IMR-90 (cell line): ENCODE measurements at regions of chr2 and their contacts with region 1.

Region 1: DNA sequence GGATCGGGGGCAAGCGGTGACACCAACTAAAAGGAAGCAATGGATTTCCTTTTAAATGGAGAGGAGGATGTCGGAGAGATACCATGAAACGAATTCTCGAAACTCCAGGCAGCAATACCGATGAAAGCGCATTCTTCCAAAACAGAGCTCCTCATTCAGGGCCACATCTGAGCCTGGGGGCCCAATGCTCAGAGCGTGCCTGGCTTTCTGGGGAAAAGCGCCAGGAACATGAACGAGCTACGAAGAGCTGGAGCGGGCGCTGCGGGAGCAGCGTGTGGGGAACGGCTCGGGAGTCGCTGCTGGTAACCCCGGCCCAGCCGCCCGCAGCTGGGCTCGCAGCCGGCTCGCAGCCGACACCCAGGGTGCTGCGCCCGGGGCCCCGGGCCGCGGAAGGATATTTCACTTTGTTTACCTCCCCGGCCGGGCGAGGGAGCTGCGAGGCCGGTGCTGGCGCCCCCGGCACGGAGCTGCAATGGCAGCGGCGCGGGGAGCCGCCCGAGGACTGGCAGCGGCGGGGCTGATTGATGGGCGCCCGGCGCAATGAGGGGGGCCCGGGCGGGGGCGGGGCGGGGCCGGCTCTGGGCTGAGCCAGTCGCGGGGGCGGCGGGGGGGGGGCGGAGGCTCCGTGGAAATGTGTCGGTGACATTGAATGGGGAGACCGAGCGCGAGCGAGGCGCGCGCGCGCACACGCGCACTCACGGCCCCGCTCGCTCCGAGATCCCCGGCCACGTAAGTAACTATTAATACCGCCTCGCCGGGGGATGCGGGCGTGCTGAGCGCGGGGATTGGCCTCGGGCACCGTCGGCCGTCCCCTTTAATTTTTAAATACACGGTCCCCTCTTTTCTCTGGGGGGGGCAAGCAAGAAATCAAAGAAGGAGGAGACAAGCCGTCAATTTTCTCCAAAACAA is at the start of gene TRIB2:
- DNase-seq: peak; percentile 84
- ATAC-seq: peak; percentile 78
- H3K4me3 ChIP-seq: peak within 1 kb of the TSS; percentile 92
- H3K27ac ChIP-seq: peak within 1 kb of the TSS; percentile 98
- H3K4me1 ChIP-seq: peaks cover 14% of the 10 kb centered on the region
- H3K27me3 ChIP-seq: no peaks in the 10 kb centered on the region
- CTCF ChIP-seq: peak; percentile 24; the same call in 1 of the 2 replicates
- POLR2A ChIP-seq: peak; percentile 15; the same call in 1 of the 2 replicates
- RAD21 ChIP-seq: peak; percentile 39
- total RNA-seq, gene TRIB2: 12.7 and 16.1 TPM in 2 replicates

Region 2: DNA sequence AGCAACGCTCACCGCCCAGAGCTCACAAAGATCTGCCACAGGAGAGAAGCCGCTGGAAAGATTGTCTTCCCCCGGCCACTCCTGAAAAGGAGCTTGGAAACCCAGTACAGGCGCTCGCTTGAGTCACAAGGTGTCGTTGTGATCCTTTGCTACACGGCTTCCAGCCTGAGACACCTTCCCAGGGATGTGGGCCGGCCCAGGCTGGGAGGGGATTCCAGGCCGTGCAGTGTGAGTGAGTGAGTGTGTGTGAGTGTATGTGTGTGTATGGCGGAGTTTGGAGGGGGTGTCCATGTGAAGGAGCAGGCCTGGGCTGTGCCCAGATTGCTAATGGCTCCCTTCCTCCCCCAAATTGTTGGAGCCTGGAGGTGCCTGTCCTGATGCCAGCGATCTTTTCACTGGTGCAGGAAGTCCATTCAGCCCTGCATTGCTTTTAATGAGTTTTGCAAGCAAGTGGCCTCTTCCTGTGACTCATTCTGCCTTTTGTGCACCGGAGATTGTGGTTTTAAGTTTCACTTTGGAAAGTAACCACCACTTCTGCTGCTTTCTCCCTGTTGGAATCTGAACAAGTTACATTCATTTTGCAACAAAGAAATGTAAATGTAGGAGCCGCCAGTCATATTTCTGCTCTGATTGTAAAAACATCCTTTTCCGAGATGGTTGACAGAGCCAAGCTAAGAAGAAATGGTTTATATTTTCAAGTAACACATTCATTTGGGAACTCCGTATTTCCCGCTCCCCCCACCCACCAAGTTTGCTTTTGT is 886.4 kb before region 1 on chr2:
- CTCF ChIA-PET with region 1: interaction called, 5 read pairs
- POLR2A ChIA-PET with region 1: no interaction called
- dilution Hi-C with region 1: no loop called
- in situ Hi-C with region 1: loop called (anchors 5 kb)
- intact Hi-C with region 1: loop called (anchors 1 kb)
- DNase-seq: peak; percentile 98
- ATAC-seq: peak; percentile 83
- H3K4me3 ChIP-seq: peak overlapping the region; percentile 25; the same call in 1 of the 2 replicates
- H3K27ac ChIP-seq: peak overlapping the region; percentile 96
- H3K4me1 ChIP-seq: peaks cover 19% of the 10 kb centered on the region
- H3K27me3 ChIP-seq: no peaks in the 10 kb centered on the region
- CTCF ChIP-seq: peak; percentile 55
- POLR2A ChIP-seq: no peak
- RAD21 ChIP-seq: peak; percentile 68

Region 3: DNA sequence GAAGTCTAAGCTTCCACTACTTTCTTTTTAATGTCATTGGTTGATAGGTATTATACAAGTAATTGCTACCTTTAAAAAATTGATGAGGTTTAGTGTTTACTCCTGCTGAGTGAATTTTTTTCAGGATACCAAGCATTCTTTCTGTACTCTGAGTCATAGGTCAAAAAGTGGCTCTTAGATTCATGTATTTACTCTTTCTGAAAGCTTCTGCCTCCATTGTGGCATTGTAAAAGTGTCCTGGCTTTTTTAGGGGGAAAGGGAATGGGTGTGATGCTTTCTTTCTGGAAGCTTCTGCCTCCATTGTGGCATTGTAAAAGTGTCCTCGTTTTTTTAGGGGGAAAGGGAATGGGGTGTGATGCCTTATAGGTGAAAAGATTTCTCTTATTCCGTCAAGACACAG is 683.6 kb before region 1 on chr2:
- CTCF ChIA-PET with region 1: no interaction called
- POLR2A ChIA-PET with region 1: no interaction called
- dilution Hi-C with region 1: no loop called
- in situ Hi-C with region 1: no loop called
- intact Hi-C with region 1: loop called (anchors 1 kb)
- DNase-seq: peak; percentile 37
- ATAC-seq: peak; percentile 80
- H3K4me3 ChIP-seq: no peak overlapping the region
- H3K27ac ChIP-seq: peak overlapping the region; percentile 51
- H3K4me1 ChIP-seq: peaks cover 3% of the 10 kb centered on the region
- H3K27me3 ChIP-seq: no peaks in the 10 kb centered on the region
- CTCF ChIP-seq: no peak
- POLR2A ChIP-seq: no peak
- RAD21 ChIP-seq: no peak

Region 4: DNA sequence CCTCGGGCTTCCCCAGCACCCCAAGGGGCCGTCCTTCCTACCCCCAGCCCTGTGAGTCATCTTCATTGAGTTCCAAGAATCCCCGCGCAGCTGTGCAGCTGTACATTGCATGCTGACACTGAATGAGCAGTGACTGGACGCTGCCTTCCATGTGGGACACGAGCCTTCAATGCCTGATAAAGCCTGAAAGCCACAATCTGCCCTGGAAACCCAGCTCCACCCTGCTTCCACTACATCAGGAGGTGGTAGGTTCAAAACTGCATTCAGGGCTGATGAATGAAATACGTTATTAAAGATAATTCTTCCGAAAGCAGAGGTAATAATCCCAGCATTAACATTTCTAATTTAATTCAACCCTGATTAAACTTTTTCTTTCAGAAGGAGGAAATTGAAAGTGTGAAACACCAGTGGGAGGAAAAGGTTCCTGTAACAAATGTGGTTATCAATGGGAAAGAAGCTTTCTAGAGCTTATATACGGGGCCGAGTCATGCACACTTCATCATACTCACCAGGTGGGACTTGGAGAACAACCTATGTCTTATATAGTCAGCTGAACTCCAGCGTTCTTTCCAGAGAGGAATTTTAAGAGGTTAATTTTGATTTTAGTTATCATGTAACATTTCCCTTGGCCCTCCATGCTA is 610.0 kb before region 1 on chr2:
- CTCF ChIA-PET with region 1: interaction called, 3 read pairs
- POLR2A ChIA-PET with region 1: no interaction called
- dilution Hi-C with region 1: no loop called
- in situ Hi-C with region 1: no loop called
- intact Hi-C with region 1: loop called (anchors 5 kb)
- DNase-seq: peak; percentile 99
- ATAC-seq: peak; percentile 97
- H3K4me3 ChIP-seq: no peak overlapping the region
- H3K27ac ChIP-seq: no peak overlapping the region
- H3K4me1 ChIP-seq: peaks cover 12% of the 10 kb centered on the region
- H3K27me3 ChIP-seq: no peaks in the 10 kb centered on the region
- CTCF ChIP-seq: no peak
- POLR2A ChIP-seq: no peak
- RAD21 ChIP-seq: peak; percentile 42

Region 5: GRCh38 chr2:12303181-12304030 is 413.1 kb before region 1 on chr2:
- CTCF ChIA-PET with region 1: interaction called, 3 read pairs
- POLR2A ChIA-PET with region 1: no interaction called
- dilution Hi-C with region 1: no loop called
- in situ Hi-C with region 1: no loop called
- intact Hi-C with region 1: loop called (anchors 5 kb)
- DNase-seq: peak; percentile 83
- ATAC-seq: peak; percentile 69
- H3K4me3 ChIP-seq: no peak overlapping the region
- H3K27ac ChIP-seq: peak overlapping the region; percentile 53
- H3K4me1 ChIP-seq: peaks cover 15% of the 10 kb centered on the region
- H3K27me3 ChIP-seq: no peaks in the 10 kb centered on the region
- CTCF ChIP-seq: no peak
- POLR2A ChIP-seq: no peak
- RAD21 ChIP-seq: no peak; the same call in 1 of the 2 replicates

Region 6: DNA sequence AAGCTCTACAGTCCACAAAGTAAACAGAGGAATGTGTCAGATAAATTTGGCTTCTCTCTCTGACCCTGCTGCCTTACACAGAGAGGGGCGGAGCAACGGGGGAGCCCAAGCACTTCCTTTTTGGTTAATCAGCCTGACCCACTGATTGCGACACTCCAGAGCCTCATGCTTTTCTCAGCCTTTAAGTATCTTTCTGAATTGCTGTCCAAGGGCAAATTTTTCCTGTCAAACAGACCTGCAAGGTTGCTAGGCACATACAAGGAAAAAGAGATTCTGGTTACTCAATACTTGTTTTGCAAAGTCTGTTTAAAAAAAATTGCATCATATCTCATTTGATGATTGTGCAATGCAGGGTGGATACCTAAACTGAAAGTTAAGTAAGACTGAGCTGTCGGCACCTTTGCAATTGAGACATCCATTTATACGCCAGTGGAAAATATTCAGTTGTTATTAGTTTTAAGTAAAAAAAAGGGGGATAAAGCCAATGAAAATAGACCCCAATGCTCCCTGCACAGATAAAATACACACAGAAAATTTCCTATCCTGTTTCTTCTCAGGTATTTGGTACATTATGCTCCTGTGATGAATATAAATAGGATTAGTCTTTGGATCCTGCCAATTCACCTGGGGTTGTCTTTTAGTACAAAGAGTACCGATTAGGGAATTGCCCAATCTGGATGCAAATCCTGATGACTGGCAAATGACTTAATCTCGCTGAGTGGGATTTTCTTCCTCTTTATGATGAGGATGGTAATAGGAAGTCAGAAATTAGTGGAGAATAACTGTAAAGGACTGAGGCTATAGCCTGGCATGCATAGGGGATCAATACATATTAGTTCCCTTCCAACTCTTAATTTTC is 260.0 kb before region 1 on chr2:
- CTCF ChIA-PET with region 1: interaction called, 4 read pairs
- POLR2A ChIA-PET with region 1: no interaction called
- dilution Hi-C with region 1: no loop called
- in situ Hi-C with region 1: no loop called
- intact Hi-C with region 1: loop called (anchors 1 kb)
- DNase-seq: peak; percentile 99
- ATAC-seq: peak; percentile 86
- H3K4me3 ChIP-seq: no peak overlapping the region
- H3K27ac ChIP-seq: peak overlapping the region; percentile 50; the same call in 1 of the 2 replicates
- H3K4me1 ChIP-seq: peaks cover 19% of the 10 kb centered on the region
- H3K27me3 ChIP-seq: no peaks in the 10 kb centered on the region
- CTCF ChIP-seq: no peak
- POLR2A ChIP-seq: no peak
- RAD21 ChIP-seq: peak; percentile 24; the same call in 1 of the 2 replicates

Region 7: DNA sequence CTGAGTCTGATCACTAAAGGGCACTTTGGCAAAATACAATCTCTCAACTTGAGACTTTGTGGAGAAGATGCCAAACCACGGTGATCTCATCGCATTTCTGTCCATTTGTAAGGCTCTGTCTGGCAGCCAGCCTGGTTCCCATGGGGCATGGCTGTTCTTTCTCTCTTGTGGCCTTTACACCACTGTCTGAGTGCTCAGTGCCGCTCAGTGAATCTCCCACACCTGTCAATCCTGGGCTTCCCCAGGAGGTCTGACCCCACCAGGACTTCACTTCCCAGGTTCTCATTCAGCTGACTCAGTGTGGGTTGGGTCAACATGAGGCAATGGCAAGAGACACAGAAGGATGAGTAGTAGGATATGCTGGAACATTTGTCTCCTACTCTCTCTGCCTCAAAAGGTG is 96.6 kb before region 1 on chr2:
- CTCF ChIA-PET with region 1: no interaction called
- POLR2A ChIA-PET with region 1: no interaction called
- dilution Hi-C with region 1: no loop called
- in situ Hi-C with region 1: no loop called
- intact Hi-C with region 1: no loop called
- DNase-seq: peak; percentile 92
- ATAC-seq: peak; percentile 77
- H3K4me3 ChIP-seq: no peak overlapping the region
- H3K27ac ChIP-seq: no peak overlapping the region
- H3K4me1 ChIP-seq: peaks cover 5% of the 10 kb centered on the region
- H3K27me3 ChIP-seq: no peaks in the 10 kb centered on the region
- CTCF ChIP-seq: no peak
- POLR2A ChIP-seq: no peak
- RAD21 ChIP-seq: no peak

Region 8: DNA sequence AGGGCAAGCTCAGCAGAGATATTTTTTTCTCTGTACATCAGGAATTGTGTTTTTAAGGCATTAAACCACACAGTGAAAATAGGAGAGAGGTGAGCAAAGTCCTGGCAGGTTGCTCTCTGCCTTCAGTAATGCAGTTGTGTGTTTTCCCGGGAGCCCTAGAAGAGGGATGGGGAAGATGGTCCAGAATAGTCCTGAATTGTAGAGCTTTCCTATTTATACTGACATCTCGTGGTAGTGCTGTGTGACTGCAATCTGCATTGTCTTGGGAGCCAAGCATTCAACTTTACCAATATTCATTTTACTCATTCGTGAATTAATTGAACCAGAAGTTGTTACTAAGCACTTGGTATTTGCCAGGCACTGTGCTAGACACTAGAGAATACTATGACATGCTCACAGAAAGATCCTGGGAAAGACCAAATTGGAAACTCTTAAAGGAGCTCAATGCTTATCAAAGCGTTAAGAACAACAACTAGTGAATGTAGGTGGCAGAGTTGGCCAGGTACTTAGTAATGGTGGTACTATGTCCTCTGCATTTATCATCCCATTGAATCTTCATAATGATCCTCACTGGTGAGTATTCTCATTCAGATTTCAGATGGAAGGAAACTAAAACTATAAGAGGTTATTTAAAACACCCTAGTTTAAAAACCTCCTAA is 214.8 kb after region 1 on chr2:
- CTCF ChIA-PET with region 1: interaction called, 28 read pairs
- POLR2A ChIA-PET with region 1: interaction called, 3 read pairs
- dilution Hi-C with region 1: no loop called
- in situ Hi-C with region 1: no loop called
- intact Hi-C with region 1: loop called (anchors 1 kb)
- DNase-seq: peak; percentile 63
- ATAC-seq: peak; percentile 93
- H3K4me3 ChIP-seq: no peak overlapping the region
- H3K27ac ChIP-seq: no peak overlapping the region
- H3K4me1 ChIP-seq: peaks cover 10% of the 10 kb centered on the region
- H3K27me3 ChIP-seq: no peaks in the 10 kb centered on the region
- CTCF ChIP-seq: peak; percentile 90
- POLR2A ChIP-seq: 0 out of 2 replicates have a peak, but pooled peaks have one; percentile 29
- RAD21 ChIP-seq: peak; percentile 93

Region 9: GRCh38 chr2:13091455-13091854 is 374.9 kb after region 1 on chr2:
- CTCF ChIA-PET with region 1: no interaction called
- POLR2A ChIA-PET with region 1: no interaction called
- dilution Hi-C with region 1: no loop called
- in situ Hi-C with region 1: no loop called
- intact Hi-C with region 1: no loop called
- DNase-seq: peak; percentile 2
- ATAC-seq: no peak
- H3K4me3 ChIP-seq: no peak overlapping the region
- H3K27ac ChIP-seq: no peak overlapping the region
- H3K4me1 ChIP-seq: no peaks in the 10 kb centered on the region
- H3K27me3 ChIP-seq: no peaks in the 10 kb centered on the region
- CTCF ChIP-seq: no peak
- POLR2A ChIP-seq: no peak
- RAD21 ChIP-seq: no peak